HEK293T (cell line): ENCODE measurements at regions of chr22 and their contacts with region 1.

Region 1: DNA sequence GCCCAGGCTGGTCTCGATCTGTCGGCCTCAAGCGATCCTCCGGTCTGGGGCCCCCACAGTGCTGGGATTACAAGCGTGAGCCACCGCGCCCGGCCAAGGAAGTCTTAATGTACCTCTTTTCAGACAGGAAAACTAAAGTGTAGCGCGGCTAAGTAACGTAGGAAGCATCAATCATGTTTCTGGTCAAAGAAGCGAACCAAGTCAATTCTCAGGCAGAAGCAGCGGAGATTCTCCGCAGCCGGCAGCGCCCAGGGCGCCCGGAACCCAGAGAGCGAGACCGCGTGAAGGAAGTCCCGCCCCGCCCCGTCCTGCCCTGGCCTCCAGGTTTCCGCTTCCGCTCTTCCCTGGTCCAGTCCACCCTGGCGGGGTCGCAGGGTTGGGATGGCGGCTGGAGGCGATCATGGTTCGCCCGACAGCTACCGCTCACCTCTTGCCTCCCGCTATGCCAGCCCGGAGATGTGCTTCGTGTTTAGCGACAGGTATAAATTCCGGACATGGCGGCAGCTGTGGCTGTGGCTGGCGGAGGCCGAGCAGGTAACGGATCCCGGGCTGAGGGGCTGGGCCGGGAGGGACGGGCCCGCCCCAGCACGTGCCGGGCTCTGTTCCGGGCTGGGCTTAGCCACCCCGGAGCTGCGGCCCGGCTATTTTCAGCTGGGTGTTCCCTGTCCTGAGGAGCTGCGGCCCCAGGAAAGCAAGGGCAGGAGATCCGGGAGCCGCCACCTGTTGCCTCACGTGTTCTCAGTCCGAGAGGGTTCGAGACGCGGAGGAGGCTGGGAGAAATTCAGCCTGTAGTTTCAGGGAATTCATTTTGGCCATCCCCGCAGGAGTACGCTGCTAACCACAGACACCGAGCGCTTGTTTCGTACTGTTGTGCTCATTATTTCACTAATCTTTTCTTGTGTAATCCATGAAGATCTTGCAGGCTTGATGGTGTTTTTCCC is at the start of gene ADSL:
- DNase-seq: peak; percentile 93

Region 2: DNA sequence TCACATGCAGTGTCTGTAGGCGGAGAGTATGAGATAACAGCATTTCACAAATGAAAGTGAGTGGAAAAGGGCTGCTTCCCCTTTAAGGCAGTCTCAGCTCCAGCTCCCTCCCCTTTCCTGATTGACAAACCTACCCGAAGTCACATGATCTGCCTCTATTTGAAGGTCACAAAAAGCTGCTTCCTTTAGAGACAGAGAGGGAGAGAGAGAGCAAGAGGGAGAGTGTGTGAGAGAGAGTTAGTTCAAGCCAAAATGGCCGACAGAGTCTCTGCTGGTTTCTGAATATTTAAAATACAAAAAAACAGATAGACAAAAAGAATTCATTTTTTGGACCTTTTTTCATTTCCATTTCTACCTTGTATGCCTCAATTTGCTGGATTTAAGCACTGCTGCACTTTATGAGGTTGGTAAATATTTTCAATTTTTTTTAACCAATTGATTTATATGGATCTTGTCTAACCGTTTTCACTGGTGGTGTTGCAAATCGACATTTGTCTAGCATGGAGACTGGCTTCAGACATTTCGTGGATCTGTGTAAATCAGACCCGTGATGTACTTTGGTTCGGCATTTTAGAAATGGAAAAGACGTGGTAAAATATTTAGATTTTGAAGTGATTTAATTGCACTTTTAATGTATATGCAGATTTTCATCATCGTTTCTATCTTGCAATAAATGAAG is 168.6 kb before region 1 on chr22 and contains the start of gene TNRC6B:
- CTCF ChIA-PET with region 1: no interaction called
- POLR2A ChIA-PET with region 1: interaction called, 12 read pairs
- DNase-seq: peak; percentile 87

Region 3: GRCh38 chr22:40330615-40331014 is 15.8 kb before region 1 on chr22:
- CTCF ChIA-PET with region 1: no interaction called
- POLR2A ChIA-PET with region 1: interaction called, 10 read pairs
- DNase-seq: no peak

Region 4: GRCh38 chr22:40583053-40583741 is 236.7 kb after region 1 on chr22:
- CTCF ChIA-PET with region 1: no interaction called
- POLR2A ChIA-PET with region 1: no interaction called
- DNase-seq: no peak